Gastrocnemius medialis (tissue), 4 donors: ENCODE measurements at regions of chr18 and their contacts with region 1.

Region 1: GRCh38 chr18:45910405-45911023 is 56.6 kb downstream of the EPG5 start:
- DNase-seq: no peak
- ATAC-seq: no peak
- H3K4me3 ChIP-seq: no peak overlapping the region
- H3K27ac ChIP-seq: no peak overlapping the region
- H3K4me1 ChIP-seq: no peaks in the 10 kb centered on the region
- H3K27me3 ChIP-seq: no peaks in the 10 kb centered on the region
- CTCF ChIP-seq: peak in 3 of 5 experiments; percentile 25 to 61 (median 42)
- POLR2A ChIP-seq: no peak

Region 2: DNA sequence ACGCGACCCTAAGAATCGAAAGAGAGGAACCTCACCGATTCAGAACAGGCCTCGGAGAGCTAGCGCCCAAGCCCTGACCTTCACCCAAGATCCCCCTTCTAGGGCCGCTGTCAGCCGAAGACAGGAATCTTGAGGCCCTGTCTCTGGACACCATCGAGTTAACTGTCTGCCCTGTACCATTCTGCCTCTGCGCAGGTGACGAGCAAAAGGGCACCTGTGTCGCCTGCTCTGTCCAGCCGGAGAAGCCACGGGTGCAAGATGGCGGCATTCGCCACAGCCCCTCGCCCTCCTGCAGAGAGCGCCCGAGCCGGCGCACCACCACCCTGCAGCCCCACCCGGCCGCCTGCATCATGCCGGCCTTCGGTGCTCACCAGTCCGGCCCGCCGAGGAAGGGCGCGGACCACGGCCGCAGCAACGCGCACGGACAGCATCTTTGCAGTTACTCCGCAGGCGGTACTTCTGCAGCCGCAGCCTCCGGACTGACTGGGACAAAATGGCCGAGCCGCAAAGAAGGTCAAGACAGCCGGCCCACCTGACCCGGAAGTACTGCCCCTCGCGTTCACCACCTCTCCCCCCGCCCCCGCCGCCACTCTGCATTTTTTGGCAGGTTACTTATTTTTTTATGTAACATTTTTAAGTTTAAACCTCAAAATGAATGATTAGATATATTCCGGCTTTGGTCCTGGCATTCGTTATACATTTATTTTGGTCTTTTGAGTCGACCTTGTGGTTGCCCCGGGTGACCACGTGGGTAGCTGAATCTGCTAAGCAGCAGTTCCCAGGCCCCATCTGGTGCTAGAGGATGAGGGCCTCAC is 187.5 kb after region 1 on chr18 and contains the start of gene ATP5F1A:
- in situ Hi-C with region 1: loop called in 1 of 4 experiments (anchors 25 kb)
- intact Hi-C with region 1: no loop called
- DNase-seq: peak; percentile 86 to 91
- ATAC-seq: peak; percentile 89 to 91
- H3K4me3 ChIP-seq: peak within 1 kb of the TSS; percentile 83 to 100 (median 90)
- H3K27ac ChIP-seq: peak within 1 kb of the TSS; percentile 92 to 97 (median 94)
- H3K4me1 ChIP-seq: peaks cover 31 to 37% of the 10 kb centered on the region in 2 donors
- H3K27me3 ChIP-seq: no peaks in the 10 kb centered on the region
- CTCF ChIP-seq: no peak
- POLR2A ChIP-seq: peak; percentile 90 to 93
- total RNA-seq, gene ATP5F1A: 845 to 1,536 (median 877) TPM